ENCODE measurements at regions of chr22 and their contacts with region 1.

Region 1: GRCh38 chr22:29267858-29268417 is at the starts of genes EWSR1 and RHBDD3:
- DNase-seq: peak; percentile 96
- ATAC-seq: peak; percentile 85
- H3K4me3 Mint-ChIP-seq: peak within 1 kb of the TSS; percentile 91
- H3K27ac Mint-ChIP-seq: peak within 1 kb of the TSS; percentile 97
- H3K4me1 Mint-ChIP-seq: peaks cover 37% of the 10 kb centered on the region
- H3K27me3 Mint-ChIP-seq: no peaks in the 10 kb centered on the region
- total RNA-seq, gene EWSR1: 326 to 567 TPM
- total RNA-seq, gene RHBDD3: 23.2 to 25.3 TPM

Region 2: GRCh38 chr22:28772633-28773460 is 495.1 kb before region 1 on chr22 and contains the start of gene CCDC117:
- CTCF ChIA-PET with region 1: interaction called, 3 read pairs
- POLR2A ChIA-PET with region 1: no interaction called
- intact Hi-C with region 1: loop called in 1 of 2 experiments (anchors 2 kb)
- DNase-seq: peak; percentile 96
- ATAC-seq: peak; percentile 91
- H3K4me3 Mint-ChIP-seq: peak within 1 kb of the TSS; percentile 94
- H3K27ac Mint-ChIP-seq: peak within 1 kb of the TSS; percentile 99
- H3K4me1 Mint-ChIP-seq: peaks cover 19% of the 10 kb centered on the region
- H3K27me3 Mint-ChIP-seq: no peaks in the 10 kb centered on the region
- total RNA-seq, gene CCDC117: 36.1 to 36.8 TPM

Region 3: DNA sequence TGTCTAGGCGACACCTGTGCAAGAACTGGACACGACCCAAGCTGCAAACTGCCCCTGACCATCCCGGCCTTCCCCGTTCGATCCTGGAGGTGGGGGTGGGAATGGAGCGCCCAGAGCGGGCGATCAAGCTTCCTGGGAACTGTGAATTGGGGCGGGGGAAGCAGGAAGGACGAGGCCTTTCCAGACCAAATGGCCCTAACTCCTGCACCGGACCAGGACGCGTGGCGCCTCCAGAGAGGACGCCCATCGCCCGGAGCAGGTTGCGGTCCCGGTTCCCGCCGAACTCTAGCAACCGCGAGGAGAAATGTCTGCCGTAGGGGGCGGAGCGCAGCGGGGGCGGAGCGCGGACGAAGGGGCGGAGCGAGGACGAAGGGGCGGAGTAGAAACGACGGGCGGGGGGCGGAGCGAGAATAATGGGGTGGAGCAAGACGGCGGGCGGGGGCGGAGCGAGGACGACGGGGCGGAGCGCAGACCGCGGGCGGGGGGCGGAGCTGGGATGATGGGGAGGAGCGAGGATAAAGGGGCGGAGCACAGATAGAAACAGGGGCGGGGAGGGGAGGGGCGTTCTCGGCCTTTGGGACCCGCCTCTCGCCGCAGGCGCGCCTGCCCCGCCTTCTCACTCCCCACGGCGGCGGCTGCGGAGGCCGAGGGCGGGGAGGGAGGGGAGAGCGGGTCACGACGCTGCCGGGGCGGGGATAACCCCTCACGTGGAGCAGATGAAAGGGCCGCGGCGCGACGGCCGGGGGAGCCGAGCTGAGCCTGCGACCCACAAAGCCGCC is 384.9 kb before region 1 on chr22 and contains the start of gene ZNRF3:
- CTCF ChIA-PET with region 1: no interaction called
- POLR2A ChIA-PET with region 1: no interaction called
- intact Hi-C with region 1: loop called (anchors 1 to 10 kb)
- DNase-seq: peak; percentile 96
- ATAC-seq: peak; percentile 91
- H3K4me3 Mint-ChIP-seq: peak within 1 kb of the TSS; percentile 75
- H3K27ac Mint-ChIP-seq: peak within 1 kb of the TSS; percentile 83
- H3K4me1 Mint-ChIP-seq: peaks cover 18% of the 10 kb centered on the region
- H3K27me3 Mint-ChIP-seq: peaks cover 26% of the 10 kb centered on the region
- total RNA-seq, gene ZNRF3: 2.3 TPM

Region 4: DNA sequence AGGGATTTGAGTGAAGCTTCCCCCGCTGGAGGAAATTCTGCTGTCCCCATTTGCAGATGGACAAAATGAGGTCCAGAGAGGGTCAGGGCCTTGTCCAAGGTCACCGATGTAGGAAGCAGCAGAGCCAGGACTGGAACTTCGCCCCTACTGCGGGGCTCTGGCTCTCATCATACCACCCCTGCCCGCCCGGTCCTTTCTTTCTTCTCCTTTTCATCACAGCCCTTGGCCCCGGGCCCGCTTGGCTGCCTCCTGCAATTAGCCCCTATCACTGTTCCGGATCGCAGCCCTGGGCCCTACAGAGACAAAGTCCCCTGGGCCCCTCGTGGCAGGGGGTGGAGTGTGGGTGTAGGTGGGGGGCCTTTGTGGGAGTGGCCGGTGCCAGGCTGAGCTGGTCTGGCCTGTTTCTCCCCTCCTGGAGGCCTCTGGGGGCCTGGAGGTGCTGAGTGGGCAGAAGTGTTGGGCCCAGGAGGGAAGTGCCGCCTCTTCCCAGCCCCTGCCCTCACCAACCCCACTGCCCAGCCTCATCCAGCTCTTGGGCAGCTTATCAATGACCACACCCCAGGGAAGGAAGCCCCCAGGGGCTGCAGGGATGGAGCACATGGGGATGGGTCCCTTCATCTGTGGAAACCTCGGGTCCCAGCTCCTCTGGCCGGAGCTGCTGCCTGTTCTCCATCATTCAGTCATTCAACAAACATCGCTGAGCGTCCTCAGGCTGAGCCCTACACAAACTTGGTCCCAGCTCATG is 58.9 kb before region 1 on chr22:
- CTCF ChIA-PET with region 1: no interaction called
- POLR2A ChIA-PET with region 1: no interaction called
- intact Hi-C with region 1: no loop called
- DNase-seq: no peak
- ATAC-seq: no peak
- H3K4me3 Mint-ChIP-seq: no peak overlapping the region
- H3K27ac Mint-ChIP-seq: no peak overlapping the region
- H3K4me1 Mint-ChIP-seq: peaks cover 2% of the 10 kb centered on the region
- H3K27me3 Mint-ChIP-seq: peaks cover 24% of the 10 kb centered on the region

Region 5: DNA sequence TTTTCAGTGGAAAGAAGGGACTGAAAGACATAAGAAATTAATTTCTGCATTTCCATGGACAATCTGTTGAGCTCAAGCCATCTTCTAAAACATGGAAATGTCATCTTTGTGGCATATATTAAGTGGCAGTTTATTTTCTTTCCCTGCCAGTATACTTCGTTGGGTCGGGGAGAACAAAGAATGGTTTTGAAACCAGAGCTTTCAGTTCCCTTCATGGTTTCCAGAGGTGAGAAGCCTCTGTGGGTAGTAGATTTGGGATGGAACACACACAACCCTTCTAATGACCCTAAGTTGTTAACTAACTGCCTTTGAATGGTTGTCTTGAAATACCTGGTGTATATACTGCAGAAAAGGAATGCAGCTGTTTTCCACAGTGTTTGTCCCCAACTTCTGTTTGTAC is 20.9 kb after region 1 on chr22:
- CTCF ChIA-PET with region 1: interaction called, 6 read pairs
- POLR2A ChIA-PET with region 1: interaction called, 7 read pairs
- intact Hi-C with region 1: loop called in 1 of 2 experiments (anchors 2 kb)
- DNase-seq: no peak
- ATAC-seq: no peak
- H3K4me3 Mint-ChIP-seq: no peak overlapping the region
- H3K27ac Mint-ChIP-seq: peak overlapping the region; percentile 45
- H3K4me1 Mint-ChIP-seq: peaks cover 11% of the 10 kb centered on the region
- H3K27me3 Mint-ChIP-seq: no peaks in the 10 kb centered on the region

Region 6: GRCh38 chr22:29387921-29388758 is 120.2 kb after region 1 on chr22 and contains the start of gene AP1B1:
- CTCF ChIA-PET with region 1: no interaction called
- POLR2A ChIA-PET with region 1: no interaction called
- intact Hi-C with region 1: loop called in 1 of 2 experiments (anchors 1 kb)
- DNase-seq: peak; percentile 97
- ATAC-seq: peak; percentile 99
- H3K4me3 Mint-ChIP-seq: peak within 1 kb of the TSS; percentile 87
- H3K27ac Mint-ChIP-seq: peak within 1 kb of the TSS; percentile 83
- H3K4me1 Mint-ChIP-seq: peaks cover 30% of the 10 kb centered on the region
- H3K27me3 Mint-ChIP-seq: no peaks in the 10 kb centered on the region
- total RNA-seq, gene AP1B1: 56.6 to 59.9 TPM

Region 7: GRCh38 chr22:29443452-29443851 is 175.5 kb after region 1 on chr22:
- CTCF ChIA-PET with region 1: no interaction called
- POLR2A ChIA-PET with region 1: no interaction called
- intact Hi-C with region 1: no loop called
- DNase-seq: no peak
- ATAC-seq: no peak
- H3K4me3 Mint-ChIP-seq: no peak overlapping the region
- H3K27ac Mint-ChIP-seq: no peak overlapping the region
- H3K4me1 Mint-ChIP-seq: no peaks in the 10 kb centered on the region
- H3K27me3 Mint-ChIP-seq: peaks cover 9% of the 10 kb centered on the region